Vagina (tissue), 2 donors: ENCODE measurements at regions of chr5 and their contacts with region 1.

Region 1: DNA sequence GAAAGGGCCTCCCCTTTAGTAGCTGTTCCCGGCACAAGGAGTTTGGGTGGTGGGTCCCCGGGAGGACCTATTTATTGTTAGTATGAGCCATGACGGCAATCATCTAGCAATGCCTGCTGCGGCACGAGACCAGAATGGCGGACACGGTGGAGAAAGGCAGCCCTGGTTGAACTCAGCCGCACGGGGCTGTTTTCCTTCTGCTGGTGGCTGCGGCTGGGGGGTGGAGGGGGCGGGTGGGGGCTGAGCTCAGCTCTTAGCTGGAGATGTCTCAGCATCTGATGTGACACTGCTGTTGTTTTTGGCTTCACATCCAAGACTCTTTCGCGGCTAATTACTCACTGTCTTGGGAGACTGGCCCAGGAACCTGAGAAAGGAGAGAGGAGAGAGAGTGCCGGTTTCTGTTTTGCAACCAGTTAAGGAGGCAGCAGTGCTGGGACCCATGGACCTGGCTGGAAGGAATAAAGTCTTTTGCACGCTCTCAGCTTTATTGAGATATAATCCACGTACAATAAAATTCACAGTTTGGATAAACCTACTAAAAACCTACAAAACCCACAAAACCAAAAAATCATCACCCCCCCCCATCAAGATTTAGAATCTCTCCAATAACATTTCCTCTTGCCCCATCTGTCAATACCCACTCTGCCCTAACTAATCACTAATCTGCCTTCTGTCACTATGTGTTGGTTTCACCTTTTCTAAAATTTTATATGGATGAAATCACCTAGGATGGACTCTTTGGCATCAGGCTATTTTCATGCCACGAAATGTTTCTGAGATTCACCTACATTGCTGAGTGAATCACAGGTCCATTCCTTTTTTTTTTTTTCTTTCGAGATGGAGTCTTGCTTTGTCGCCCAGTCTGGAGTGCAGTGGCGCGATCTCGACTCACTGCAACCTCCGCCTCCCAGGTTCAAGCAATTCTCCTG is 81.8 kb upstream of the NEURL1B start:
- DNase-seq: peak in 1 of 2 donors; percentile 94
- H3K4me3 ChIP-seq: peak overlapping the region; percentile 25 to 35
- H3K27ac ChIP-seq: peak overlapping the region; percentile 84
- H3K4me1 ChIP-seq: peaks cover 36% of the 10 kb centered on the region
- H3K27me3 ChIP-seq: no peaks in the 10 kb centered on the region
- CTCF ChIP-seq: no peak
- POLR2A ChIP-seq: no peak

Region 2: GRCh38 chr5:172502969-172503368 is 56.3 kb before region 1 on chr5:
- intact Hi-C with region 1: loop called (anchors 10 kb)
- DNase-seq: peak; percentile 37 to 62
- H3K4me3 ChIP-seq: no peak overlapping the region
- H3K27ac ChIP-seq: no peak overlapping the region
- H3K4me1 ChIP-seq: peaks cover 15% of the 10 kb centered on the region
- H3K27me3 ChIP-seq: no peaks in the 10 kb centered on the region
- CTCF ChIP-seq: no peak
- POLR2A ChIP-seq: no peak

Region 3: GRCh38 chr5:172574871-172575223 is 15.6 kb after region 1 on chr5:
- intact Hi-C with region 1: no loop called
- DNase-seq: no peak
- H3K4me3 ChIP-seq: no peak overlapping the region
- H3K27ac ChIP-seq: peak overlapping the region; percentile 54
- H3K4me1 ChIP-seq: peaks cover 13% of the 10 kb centered on the region
- H3K27me3 ChIP-seq: no peaks in the 10 kb centered on the region
- CTCF ChIP-seq: no peak
- POLR2A ChIP-seq: no peak

Region 4: DNA sequence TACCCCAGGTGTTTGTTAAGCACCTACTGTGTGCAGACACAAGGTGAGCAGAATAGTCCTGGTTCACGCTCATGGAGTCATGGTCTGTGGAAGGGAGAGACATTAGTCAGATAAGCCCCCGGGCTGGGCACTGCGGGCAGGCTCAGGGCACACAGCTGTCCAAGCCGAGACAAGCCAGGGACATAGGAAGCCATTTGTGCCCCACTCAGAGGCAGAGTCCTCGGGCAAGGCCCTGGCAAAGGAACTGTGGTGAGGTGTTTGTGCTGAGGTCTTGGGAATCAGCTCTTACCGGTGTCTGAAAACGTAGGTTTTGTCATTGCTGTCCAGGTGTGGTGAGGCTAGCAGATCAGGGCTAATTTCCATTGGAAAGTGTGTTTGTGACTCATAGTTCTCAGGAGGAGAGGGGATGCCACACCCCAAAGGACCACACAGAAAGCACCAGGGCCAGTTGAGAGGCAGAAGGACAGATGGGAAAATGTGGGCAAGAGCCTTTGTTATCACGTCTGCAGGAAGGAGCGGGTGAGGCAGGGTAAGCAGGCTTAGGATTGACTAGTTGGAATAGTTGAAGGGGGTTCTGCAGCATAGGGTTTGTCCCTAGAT is 35.7 kb after region 1 on chr5:
- intact Hi-C with region 1: no loop called
- DNase-seq: no peak
- H3K4me3 ChIP-seq: no peak overlapping the region
- H3K27ac ChIP-seq: no peak overlapping the region
- H3K4me1 ChIP-seq: peaks cover 6% of the 10 kb centered on the region
- H3K27me3 ChIP-seq: no peaks in the 10 kb centered on the region
- CTCF ChIP-seq: no peak
- POLR2A ChIP-seq: no peak

Region 5: GRCh38 chr5:172640822-172641358 is 81.6 kb after region 1 on chr5 and contains the start of gene NEURL1B:
- intact Hi-C with region 1: loop called (anchors 10 kb)
- DNase-seq: no peak
- H3K4me3 ChIP-seq: peak within 1 kb of the TSS; percentile 69 to 75
- H3K27ac ChIP-seq: peak within 1 kb of the TSS; percentile 88
- H3K4me1 ChIP-seq: peaks cover 26% of the 10 kb centered on the region
- H3K27me3 ChIP-seq: no peaks in the 10 kb centered on the region
- CTCF ChIP-seq: no peak
- POLR2A ChIP-seq: peak in 1 of 2 donors; percentile 35
- total RNA-seq, gene NEURL1B: 30.9 TPM

Region 6: DNA sequence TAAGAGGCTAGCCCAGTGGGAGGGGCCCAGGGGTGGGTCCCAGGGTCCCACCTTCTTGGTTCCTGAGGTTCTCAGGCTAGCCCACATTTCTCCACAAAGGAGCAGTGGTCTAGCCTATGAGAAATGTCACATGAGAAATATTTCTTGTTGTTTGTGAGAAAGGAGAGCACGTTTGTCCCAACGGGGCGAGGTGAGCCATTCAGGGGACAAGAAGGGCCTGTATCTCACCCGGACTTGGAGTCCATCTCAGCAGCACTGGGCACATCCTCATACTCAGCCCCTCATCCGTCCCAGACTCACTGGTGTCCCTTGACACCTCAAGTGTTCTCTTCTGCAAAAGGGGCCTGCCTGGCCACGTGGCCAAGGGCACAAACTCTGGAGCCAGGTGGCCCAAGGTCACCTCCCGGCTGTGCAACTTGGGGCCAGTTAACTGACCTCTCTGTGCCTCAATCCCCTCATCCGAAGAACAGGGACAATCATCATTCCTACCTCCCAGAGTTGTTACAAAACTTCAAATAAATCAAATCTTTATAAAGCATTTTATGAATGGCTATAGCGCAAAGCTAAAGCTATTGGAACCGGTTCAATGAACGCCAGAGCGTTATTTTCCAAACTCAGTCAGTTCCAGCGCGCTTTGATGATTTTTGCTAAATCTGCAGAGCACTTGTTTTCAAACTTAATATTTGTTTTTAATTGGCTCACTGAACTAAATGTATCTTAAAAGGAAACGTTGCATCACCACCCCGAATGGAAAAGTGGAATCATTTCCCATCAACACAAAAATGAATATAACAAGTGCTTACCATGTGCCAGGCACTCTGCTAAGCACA is 162.2 kb after region 1 on chr5:
- intact Hi-C with region 1: no loop called
- DNase-seq: no peak
- H3K4me3 ChIP-seq: no peak overlapping the region
- H3K27ac ChIP-seq: peak overlapping the region; percentile 40
- H3K4me1 ChIP-seq: peaks cover 25% of the 10 kb centered on the region
- H3K27me3 ChIP-seq: no peaks in the 10 kb centered on the region
- CTCF ChIP-seq: no peak
- POLR2A ChIP-seq: no peak